Activated CD4-positive, alpha-beta T cell treated with anti-CD3 and anti-CD28 coated beads for 36 hours (primary cell): ENCODE measurements at regions of chr5 and their contacts with region 1.

Region 1: DNA sequence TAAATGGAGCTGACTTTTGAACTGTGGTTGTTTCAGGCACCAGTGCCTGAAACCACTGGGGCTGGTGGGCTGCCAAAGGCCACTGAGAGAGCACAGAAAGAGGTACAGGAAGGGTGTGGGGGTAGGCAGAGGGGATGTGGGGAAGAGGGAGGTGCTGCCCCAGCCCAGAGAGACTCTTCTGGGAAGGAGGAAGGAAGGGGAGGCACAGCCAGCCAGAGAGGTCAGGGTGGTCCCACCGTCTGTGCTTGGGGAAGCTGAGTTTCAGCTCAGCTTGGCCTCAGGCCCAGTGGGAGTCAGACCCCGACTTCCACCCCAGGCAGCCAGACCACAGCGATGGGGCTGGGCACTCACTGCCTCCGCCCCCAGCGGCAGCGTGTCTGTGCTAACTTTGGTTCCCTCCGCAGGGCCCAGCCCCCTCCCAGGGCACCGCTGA is 8.6 kb upstream of the PHYKPL start:
- DNase-seq: no peak
- ATAC-seq: no peak
- H3K4me3 Mint-ChIP-seq: no peak overlapping the region
- H3K27ac Mint-ChIP-seq: peak overlapping the region; percentile 45
- H3K4me1 Mint-ChIP-seq: peaks cover 39% of the 10 kb centered on the region
- H3K27me3 Mint-ChIP-seq: no peaks in the 10 kb centered on the region

Region 2: DNA sequence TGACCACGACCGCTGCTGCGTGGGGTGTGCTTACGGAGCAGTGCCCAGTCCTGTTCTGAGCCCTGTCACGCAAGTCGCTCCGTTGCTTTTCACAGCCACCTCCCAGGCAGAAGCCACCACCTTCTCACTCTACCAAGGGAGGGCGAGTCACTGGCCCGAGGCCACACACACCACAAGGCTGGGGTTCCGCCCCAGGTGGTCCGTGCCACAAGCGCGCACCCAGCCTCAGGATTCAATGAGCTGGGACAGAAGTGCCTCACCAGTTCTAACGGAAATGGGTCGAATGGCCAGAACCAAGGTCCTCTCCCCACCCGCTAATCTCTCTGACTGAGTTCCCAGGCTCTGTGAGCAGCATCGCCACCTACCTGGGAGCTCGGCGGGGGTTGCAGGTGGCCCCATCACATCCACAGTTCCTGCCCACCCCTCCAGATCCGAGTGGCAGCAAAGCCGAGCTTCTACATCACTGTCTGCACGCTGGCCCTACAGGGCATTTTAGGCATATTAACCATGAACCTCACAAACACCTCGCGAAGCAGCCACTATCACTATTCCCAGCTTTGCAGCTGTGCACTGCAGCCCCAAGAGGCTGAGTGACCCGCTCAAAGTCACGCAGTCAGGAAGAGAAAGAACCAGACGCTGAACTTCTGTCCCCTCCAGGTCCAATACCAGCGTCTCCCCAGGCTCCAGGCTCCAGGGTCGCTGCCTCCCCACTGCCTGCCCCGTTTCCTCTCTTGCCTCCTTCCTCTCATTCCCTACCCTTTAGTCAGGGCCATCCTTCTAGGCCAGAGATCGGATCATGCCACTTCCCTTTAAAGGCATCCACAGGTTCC is 83.4 kb after region 1 on chr5:
- CTCF ChIA-PET with region 1: no interaction called
- POLR2A ChIA-PET with region 1: no interaction called
- intact Hi-C with region 1: loop called in 1 of 2 experiments (anchors 5 kb)
- DNase-seq: no peak
- ATAC-seq: no peak
- H3K4me3 Mint-ChIP-seq: no peak overlapping the region
- H3K27ac Mint-ChIP-seq: no peak overlapping the region
- H3K4me1 Mint-ChIP-seq: no peaks in the 10 kb centered on the region
- H3K27me3 Mint-ChIP-seq: no peaks in the 10 kb centered on the region

Region 3: DNA sequence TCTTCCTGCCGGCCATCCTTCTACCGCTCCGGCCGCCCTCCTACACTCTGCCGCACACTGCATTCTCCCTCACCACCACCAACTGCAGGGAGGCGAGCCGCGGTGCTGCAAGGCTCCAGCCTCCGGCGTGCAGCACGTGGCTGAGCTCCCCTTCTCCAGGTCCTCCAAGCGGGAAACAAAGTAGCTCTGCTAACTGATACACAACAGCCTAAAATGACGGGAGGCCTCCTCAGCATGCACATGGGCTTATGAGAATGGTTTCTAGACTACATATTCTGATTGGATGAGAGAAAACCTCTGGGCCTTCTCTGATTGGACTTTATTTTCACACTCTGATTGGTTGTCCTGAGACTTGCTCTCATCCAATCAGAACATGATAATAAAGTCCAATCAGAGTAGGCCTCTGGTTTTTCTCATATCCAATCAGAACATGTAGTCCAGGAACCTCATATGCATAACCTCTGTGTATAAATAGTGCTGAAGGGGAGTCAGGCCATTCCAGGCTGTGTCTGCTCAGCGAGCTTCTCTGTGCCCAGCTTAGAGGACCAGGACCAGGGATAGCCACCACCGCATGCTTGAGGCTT is 591.5 kb after region 1 on chr5:
- CTCF ChIA-PET with region 1: no interaction called
- POLR2A ChIA-PET with region 1: no interaction called
- intact Hi-C with region 1: no loop called
- DNase-seq: no peak
- ATAC-seq: no peak
- H3K4me3 Mint-ChIP-seq: no peak overlapping the region
- H3K27ac Mint-ChIP-seq: no peak overlapping the region
- H3K4me1 Mint-ChIP-seq: no peaks in the 10 kb centered on the region
- H3K27me3 Mint-ChIP-seq: peaks cover 2% of the 10 kb centered on the region